ENCODE measurements at regions of chr7 and their contacts with region 1.

Region 1: DNA sequence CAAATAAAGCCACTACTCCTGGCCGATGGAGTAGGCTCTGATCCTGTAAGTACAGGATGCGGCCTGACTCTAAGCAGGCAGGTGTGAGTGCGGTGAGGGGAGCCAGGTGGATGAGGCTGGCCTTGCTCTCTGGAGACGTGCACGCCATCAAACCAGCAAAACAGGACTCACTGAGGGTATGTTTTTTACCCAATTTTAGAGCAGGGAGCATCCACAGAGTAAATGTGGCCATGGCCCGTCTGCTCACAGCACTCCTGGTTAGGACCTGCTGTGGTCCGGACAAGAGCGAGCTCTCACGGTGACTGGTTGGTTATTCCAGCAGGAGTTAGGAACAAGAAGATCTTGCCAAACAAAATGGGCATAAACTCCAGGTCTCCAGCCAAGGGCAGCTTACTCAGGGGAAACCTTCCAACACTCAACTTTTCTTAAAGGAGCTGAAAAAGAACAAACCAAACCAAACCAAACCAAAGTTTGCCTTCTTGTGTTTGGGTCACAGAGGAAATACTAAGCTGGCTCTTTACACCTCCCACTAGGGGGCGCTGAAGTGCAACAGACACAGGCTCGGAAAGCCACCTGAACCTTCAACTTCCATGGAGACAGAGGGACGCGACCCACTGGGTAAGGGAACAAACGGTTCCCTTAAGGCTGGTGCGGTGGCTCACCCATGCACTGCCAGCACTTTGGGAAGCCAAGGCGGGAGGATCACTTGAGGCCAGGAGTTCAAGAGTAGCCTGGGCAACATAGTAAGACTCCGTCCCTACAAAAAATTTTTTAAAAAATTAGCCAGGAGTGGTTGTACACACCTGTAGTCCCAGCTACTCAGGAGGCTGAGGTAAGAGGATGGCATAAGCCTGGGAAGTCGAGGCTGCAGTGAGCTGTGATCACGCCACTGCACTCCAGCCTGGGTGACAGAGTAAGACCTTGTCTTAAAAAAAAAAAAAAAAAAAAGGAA is 122.4 kb downstream of the CLEC2L start:
- DNase-seq: peak; percentile 72 to 80
- ATAC-seq: peak; percentile 75 to 89
- H3K4me3 ChIP-seq: no peak overlapping the region
- H3K27ac ChIP-seq: peak overlapping the region in 3 of 4 donors; percentile 72 to 78 (median 77)
- H3K4me1 ChIP-seq: peaks cover 23 to 31% of the 10 kb centered on the region in 2 donors
- H3K27me3 ChIP-seq: no peaks in the 10 kb centered on the region
- CTCF ChIP-seq: peak; percentile 87 to 94 (median 93)
- POLR2A ChIP-seq: no peak

Region 2: DNA sequence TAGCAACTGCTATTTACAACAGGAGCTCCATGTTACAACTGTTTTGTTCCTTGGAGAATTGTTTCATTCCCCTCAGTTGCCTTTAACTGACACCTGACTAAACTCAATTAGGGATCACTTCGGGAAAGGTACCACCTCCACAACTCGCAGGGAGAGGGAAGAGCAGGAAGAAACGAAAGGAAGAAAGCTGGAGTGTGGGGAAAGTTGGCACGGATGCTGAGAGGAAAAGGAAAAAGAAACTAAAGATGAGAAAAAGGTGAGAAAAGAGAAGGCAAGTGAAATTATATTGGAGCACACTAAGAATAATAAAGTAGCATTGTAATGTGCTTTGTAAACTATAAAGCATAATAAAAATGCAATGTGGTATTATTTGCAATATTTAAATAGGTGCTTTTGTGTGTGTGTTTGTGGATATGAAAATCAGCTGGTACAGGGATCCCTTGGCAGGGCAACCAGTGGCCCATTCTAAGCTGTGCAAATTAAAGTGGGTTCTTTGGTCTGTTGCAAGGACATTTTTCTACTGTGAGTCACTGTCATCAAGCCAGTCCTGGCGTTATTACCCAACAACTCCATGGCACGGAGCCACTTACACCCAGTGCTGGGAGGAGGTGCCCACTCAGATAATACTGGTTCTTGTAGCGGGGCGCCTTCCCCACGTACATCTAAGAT is 86.1 kb after region 1 on chr7:
- in situ Hi-C with region 1: no loop called
- intact Hi-C with region 1: loop called (anchors 5 kb)
- DNase-seq: peak; percentile 85 to 96
- ATAC-seq: peak; percentile 83 to 86
- H3K4me3 ChIP-seq: peak overlapping the region; percentile 20 to 33 (median 25)
- H3K27ac ChIP-seq: peak overlapping the region; percentile 91 to 93 (median 92)
- H3K4me1 ChIP-seq: peaks cover 67 to 73% of the 10 kb centered on the region in 2 donors
- H3K27me3 ChIP-seq: no peaks in the 10 kb centered on the region
- CTCF ChIP-seq: no peak
- POLR2A ChIP-seq: peak in 1 of 2 donors; percentile 56

Region 3: DNA sequence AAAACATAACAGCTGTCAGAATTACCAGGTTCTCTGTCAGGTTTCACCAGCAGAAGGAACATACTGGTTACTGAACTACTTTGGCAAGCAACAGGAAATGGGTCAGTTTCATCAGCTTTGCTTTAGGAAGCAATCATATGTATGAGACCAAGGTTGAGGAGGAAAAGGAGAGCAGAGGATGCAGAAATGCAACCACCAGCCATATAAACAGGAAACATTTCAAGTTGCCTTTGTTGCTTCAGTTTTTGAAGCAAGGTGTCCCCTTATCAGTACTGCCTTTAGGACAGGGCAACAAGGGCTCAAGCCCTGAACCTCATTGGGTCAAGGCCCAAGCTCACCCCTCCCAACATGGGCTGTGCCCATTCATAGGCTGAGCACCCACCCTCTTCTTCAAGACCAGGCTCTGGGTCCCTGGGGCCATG is 121.7 kb after region 1 on chr7:
- in situ Hi-C with region 1: loop called in 2 of 4 experiments (anchors 10 kb)
- intact Hi-C with region 1: no loop called
- DNase-seq: no peak
- ATAC-seq: peak in 1 of 2 donors; percentile 8
- H3K4me3 ChIP-seq: no peak overlapping the region
- H3K27ac ChIP-seq: peak overlapping the region in 3 of 4 donors; percentile 7 to 24 (median 16)
- H3K4me1 ChIP-seq: peaks cover 50 to 53% of the 10 kb centered on the region in 2 donors
- H3K27me3 ChIP-seq: no peaks in the 10 kb centered on the region
- CTCF ChIP-seq: no peak
- POLR2A ChIP-seq: no peak

Region 4: GRCh38 chr7:139777948-139778841 is 132.3 kb after region 1 on chr7 and contains the start of gene HIPK2:
- in situ Hi-C with region 1: loop called in 1 of 4 experiments (anchors 10 kb)
- intact Hi-C with region 1: loop called (anchors 1 kb)
- DNase-seq: peak; percentile 54 to 71
- ATAC-seq: peak; percentile 57 to 69
- H3K4me3 ChIP-seq: peak within 1 kb of the TSS; percentile 81 to 91 (median 86)
- H3K27ac ChIP-seq: peak within 1 kb of the TSS; percentile 91 to 99 (median 96)
- H3K4me1 ChIP-seq: peaks cover 30 to 32% of the 10 kb centered on the region in 2 donors
- H3K27me3 ChIP-seq: no peaks in the 10 kb centered on the region
- CTCF ChIP-seq: no peak
- POLR2A ChIP-seq: peak in 1 of 2 donors; percentile 55
- total RNA-seq, gene HIPK2: 30.5 to 77.4 (median 58.9) TPM

Region 5: DNA sequence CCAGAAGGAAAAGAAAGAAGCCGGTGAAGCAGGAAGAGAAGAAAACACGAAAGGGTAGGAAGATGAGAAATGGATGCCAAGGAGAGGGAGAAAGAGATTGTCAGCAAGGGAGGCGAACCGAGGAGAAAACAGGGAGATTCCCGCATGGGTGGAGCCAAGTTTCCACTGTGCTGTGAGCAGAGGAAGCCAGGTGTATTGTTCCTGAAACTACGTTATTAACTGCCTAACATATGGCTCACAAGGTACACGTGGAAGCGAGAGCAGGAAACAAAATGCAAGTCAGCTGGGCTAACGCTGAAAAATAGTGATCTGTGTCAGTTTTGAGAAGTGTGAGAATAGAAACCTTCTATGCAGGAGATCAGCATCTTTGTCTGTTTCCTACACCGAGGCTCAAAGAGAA is 152.4 kb after region 1 on chr7:
- in situ Hi-C with region 1: no loop called
- intact Hi-C with region 1: loop called (anchors 5 kb)
- DNase-seq: no peak
- ATAC-seq: no peak
- H3K4me3 ChIP-seq: no peak overlapping the region
- H3K27ac ChIP-seq: no peak overlapping the region
- H3K4me1 ChIP-seq: no peaks in the 10 kb centered on the region
- H3K27me3 ChIP-seq: no peaks in the 10 kb centered on the region
- CTCF ChIP-seq: no peak
- POLR2A ChIP-seq: no peak

Region 6: GRCh38 chr7:139829025-139829774 is 183.4 kb after region 1 on chr7 and contains the start of gene TBXAS1:
- in situ Hi-C with region 1: loop called in 3 of 4 experiments (anchors 10 kb)
- intact Hi-C with region 1: no loop called
- DNase-seq: peak in 1 of 2 donors; percentile 33
- ATAC-seq: peak in 1 of 2 donors; percentile 36
- H3K4me3 ChIP-seq: peak within 1 kb of the TSS in 1 of 4 donors; percentile 25
- H3K27ac ChIP-seq: no peak within 1 kb of the TSS
- H3K4me1 ChIP-seq: no peaks in the 10 kb centered on the region
- H3K27me3 ChIP-seq: no peaks in the 10 kb centered on the region
- CTCF ChIP-seq: no peak
- POLR2A ChIP-seq: no peak
- total RNA-seq, gene TBXAS1: 0.41 to 5.2 (median 3.3) TPM

Region 7: DNA sequence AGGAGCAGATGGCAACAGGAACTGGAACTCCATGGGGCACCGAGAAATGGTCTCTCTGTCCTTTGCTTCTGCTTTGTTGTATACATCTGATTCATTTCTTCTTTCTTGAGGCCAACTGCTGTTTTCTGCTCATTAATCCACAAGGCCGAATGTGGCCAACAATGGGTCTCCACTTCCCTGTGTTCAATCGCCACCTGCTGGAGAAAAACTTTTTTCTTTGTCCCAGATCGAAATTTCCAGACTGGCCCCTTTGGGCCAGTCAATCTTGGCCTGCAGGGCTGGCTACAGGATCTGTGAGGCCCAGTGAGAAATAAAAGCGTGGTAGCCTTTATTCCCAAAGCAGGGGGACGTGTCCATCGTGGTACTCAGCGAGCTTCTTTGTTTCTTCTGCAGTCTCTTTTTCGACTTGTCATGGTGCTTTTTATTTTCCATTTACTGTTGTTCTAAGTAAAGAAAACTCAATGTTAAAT is 358.1 kb after region 1 on chr7:
- in situ Hi-C with region 1: loop called (anchors 5 to 10 kb)
- intact Hi-C with region 1: loop called (anchors 1 kb)
- DNase-seq: no peak
- ATAC-seq: no peak
- H3K4me3 ChIP-seq: no peak overlapping the region
- H3K27ac ChIP-seq: no peak overlapping the region
- H3K4me1 ChIP-seq: no peaks in the 10 kb centered on the region
- H3K27me3 ChIP-seq: no peaks in the 10 kb centered on the region
- CTCF ChIP-seq: peak in 4 of 5 experiments; percentile 16 to 42 (median 26)
- POLR2A ChIP-seq: no peak

Measured in gastrocnemius medialis (tissue), 4 donors.